ENCODE measurements at regions of chr5 and their contacts with region 1.

Region 1: GRCh38 chr5:12825163-12825562 is 920.9 kb upstream of the CTNND2 start:
- DNase-seq: no peak
- ATAC-seq: no peak

Region 2: DNA sequence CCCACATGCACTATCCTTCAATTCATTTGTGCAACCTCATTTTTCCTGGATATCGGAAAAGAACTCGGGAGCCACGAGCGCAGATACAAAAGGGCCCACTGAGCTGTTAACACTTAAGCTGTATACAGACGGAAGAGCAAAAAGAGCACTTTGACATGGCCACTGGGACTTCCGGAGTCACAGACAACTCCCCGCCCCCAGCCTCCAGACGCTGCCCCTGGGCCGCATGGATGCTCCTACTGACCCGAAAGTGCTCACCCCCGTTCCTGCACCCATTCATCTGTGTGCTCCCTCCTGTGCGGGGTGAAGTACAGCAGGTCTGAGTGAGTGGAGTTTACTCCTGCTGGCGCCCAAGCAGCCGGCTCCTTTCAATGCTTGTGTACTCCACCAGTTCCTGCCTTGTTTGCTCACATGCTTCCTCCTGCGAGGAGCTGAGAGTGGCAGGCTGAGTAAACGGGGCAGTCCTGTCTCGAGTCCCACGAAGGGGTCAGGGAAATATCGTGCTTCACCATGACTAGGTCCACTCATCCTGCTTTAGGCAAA is 19.9 kb before region 1 on chr5:
- intact Hi-C with region 1: loop called in 1 of 2 experiments (anchors 2 kb)
- DNase-seq: no peak
- ATAC-seq: no peak

Region 3: DNA sequence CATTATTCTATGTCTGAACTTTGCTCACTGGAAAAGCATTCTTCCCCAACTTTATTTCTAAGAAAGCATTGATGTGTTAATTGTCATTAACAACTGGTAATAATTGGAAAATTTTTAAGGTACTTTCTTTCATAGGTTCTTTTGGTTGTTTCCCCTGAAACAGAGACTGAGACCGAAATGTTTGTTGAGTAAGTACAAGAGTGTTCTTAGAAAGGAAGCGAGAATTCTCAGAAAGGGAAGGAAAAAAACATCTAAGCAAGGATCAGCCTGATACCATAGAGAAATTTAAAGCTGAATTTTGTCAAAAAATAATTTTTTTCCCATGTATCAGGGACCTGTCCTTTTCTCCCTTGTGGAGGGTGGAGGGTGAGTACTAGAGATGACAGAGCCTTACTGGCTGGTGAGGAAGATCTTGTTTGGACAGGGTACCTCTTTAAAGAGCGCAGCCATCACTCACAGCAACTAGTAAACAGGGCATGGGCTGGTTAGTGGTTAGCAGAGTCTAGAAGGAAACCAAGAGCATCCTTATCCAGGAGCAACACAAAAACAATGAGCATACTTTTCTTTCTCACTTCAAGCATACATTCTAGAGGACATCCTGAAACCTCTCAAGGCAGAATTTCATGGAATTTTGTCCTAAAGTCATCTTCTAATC is 220.9 kb after region 1 on chr5:
- intact Hi-C with region 1: no loop called
- DNase-seq: no peak
- ATAC-seq: no peak